Heart left ventricle (tissue), 16 donors: ENCODE measurements at regions of chr12 and their contacts with region 1.

Region 1: DNA sequence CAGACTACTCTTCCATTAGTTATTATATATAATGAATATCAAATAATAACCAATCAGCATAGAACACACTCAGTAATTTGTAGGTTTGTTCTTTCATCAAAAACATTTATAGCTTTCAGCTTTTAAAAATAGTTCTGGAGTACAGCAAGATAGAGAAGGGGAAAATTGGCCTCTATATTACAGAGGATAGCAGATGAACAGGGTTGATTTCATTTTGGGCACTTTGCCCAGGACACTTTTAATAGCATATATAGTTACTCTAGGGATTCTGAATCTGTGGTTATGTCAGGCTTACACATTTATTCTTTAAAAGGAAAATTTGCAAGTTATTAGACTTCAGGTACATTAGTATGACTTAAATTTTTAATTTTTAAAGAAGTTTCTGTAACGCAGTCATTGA is 52.6 kb downstream of the IFT81 start:
- DNase-seq: peak in 1 of 5 donors; percentile 11
- ATAC-seq: peak; percentile 47 to 73 (median 64)
- H3K4me3 ChIP-seq: no peak overlapping the region
- H3K27ac ChIP-seq: peak overlapping the region in 7 of 12 donors; percentile 6 to 57 (median 26)
- H3K4me1 ChIP-seq: peaks cover 0 to 39% (median 7%) of the 10 kb centered on the region in 12 donors
- H3K27me3 ChIP-seq: no peaks in the 10 kb centered on the region
- CTCF ChIP-seq: no peak
- POLR2A ChIP-seq: no peak

Region 2: DNA sequence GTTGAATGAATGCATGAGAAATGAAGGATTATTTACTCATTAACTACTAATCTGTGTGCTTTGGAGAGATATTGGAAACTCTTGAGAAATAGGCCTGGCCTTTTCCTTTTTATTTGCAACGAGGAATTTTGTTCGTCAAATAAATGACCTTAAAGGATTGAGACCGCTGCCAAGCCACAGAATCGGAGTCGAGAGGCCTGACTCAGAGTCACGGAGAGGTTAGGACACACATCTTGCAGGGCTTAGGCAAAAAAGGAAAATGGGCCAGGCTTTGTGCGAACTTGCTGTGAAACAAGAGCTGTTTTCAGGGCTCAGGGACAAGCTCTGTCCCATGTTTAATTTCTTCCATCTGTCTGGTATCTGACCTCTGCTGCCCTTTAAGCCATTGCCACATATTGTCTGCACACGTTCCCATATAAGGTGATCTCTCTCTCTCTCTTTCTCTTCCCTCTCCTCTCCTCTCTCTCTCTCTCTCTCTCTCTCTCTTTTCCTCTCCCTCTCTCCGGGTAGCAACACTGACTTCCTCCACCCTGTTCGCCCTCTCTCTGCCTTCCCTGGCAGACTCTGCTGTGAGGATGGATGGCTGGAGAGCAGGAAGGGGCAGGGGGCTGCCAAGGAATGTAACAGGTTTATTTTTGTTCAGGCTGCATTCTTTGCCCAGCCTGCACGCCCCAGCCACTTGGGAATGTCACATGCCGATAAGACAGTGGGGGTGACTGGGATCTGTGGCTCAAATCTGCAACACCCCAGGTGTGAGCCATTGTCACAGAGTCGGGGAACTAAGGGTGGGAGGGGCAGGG is 67.5 kb before region 1 on chr12:
- intact Hi-C with region 1: loop called in 4 of 10 experiments (anchors 5 to 10 kb)
- DNase-seq: peak; percentile 58 to 88 (median 75)
- ATAC-seq: peak; percentile 82 to 90 (median 89)
- H3K4me3 ChIP-seq: peak overlapping the region in 3 of 12 donors; percentile 1 to 15 (median 4)
- H3K27ac ChIP-seq: peak overlapping the region; percentile 71 to 91 (median 80)
- H3K4me1 ChIP-seq: peaks cover 0 to 34% (median 26%) of the 10 kb centered on the region in 12 donors
- H3K27me3 ChIP-seq: no peaks in the 10 kb centered on the region
- CTCF ChIP-seq: no peak
- POLR2A ChIP-seq: no peak

Region 3: DNA sequence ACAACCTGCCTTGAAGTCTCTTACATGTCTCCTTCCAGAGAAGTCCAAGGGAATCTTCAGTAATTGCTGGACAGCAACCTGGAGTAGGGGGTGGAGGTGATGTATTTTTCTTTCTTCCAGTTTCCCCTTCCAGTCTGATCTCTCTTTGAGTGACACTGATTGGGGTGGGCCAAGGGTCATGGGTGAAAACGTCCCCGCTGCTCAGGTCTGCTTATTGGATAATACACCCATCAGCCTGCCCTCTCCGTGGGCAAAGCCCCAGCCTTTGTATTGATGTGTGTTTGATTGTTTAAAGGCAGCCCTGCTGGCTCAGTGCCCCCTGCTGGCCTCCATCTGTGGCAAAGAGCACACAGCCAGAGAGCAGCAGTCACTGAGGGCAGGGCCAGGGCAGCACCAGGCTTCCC is 68.6 kb after region 1 on chr12:
- intact Hi-C with region 1: loop called in 2 of 10 experiments (anchors 10 kb)
- DNase-seq: peak in 3 of 5 donors; percentile 77 to 82 (median 80)
- ATAC-seq: peak in 2 of 4 donors; percentile 34 to 52
- H3K4me3 ChIP-seq: no peak overlapping the region
- H3K27ac ChIP-seq: peak overlapping the region; percentile 71 to 97 (median 88)
- H3K4me1 ChIP-seq: peaks cover 0 to 55% (median 40%) of the 10 kb centered on the region in 12 donors
- H3K27me3 ChIP-seq: no peaks in the 10 kb centered on the region
- CTCF ChIP-seq: peak in 9 of 12 donors; percentile 9 to 49 (median 26)
- POLR2A ChIP-seq: no peak